ENCODE measurements at regions of chr20 and their contacts with region 1.

Region 1: DNA sequence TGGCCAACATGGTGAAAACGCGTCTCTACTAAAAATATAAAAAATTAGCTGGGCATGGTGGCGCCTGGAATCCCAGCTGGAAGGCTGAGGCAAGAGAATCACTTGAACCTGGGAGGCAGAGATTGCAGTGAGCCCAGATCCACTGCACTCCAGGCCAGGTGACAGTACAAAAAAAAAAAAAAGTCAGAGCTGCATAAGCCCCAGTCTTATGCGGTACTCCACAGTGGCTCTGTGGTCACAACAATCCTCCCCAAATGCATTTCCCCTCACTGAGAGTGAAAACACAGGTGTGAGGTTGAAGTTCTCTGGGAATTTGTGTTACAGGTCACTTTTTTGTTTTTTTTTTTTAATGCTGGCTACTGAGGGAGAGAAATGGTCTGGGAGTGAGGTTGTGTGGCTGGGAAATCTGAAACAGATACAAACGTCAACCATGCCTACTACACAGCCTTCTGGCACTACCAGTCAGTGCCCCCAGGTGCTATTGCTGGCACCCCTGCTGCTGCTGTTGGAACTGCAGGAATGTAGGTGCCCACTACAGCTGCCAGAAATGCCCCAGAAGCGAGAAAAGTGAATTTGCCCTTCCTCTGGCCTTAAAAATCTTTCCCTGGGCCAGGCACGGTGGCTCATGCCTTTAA is 5.7 kb downstream of the MRPS26 start:
- DNase-seq: no peak
- H3K4me3 ChIP-seq: no peak overlapping the region
- H3K27ac ChIP-seq: no peak overlapping the region
- H3K4me1 ChIP-seq: peaks cover 3% of the 10 kb centered on the region
- H3K27me3 ChIP-seq: no peaks in the 10 kb centered on the region
- CTCF ChIP-seq: peak in 1 of 2 donors; percentile 19

Region 2: GRCh38 chr20:3115190-3116107 is 63.9 kb after region 1 on chr20:
- CTCF ChIA-PET with region 1: no interaction called
- dilution Hi-C with region 1: no loop called
- in situ Hi-C with region 1: no loop called
- intact Hi-C with region 1: loop called (anchors 1 kb)
- DNase-seq: peak; percentile 37
- H3K4me3 ChIP-seq: no peak overlapping the region
- H3K27ac ChIP-seq: no peak overlapping the region
- H3K4me1 ChIP-seq: no peaks in the 10 kb centered on the region
- H3K27me3 ChIP-seq: no peaks in the 10 kb centered on the region
- CTCF ChIP-seq: peak; percentile 72 to 80

Region 3: DNA sequence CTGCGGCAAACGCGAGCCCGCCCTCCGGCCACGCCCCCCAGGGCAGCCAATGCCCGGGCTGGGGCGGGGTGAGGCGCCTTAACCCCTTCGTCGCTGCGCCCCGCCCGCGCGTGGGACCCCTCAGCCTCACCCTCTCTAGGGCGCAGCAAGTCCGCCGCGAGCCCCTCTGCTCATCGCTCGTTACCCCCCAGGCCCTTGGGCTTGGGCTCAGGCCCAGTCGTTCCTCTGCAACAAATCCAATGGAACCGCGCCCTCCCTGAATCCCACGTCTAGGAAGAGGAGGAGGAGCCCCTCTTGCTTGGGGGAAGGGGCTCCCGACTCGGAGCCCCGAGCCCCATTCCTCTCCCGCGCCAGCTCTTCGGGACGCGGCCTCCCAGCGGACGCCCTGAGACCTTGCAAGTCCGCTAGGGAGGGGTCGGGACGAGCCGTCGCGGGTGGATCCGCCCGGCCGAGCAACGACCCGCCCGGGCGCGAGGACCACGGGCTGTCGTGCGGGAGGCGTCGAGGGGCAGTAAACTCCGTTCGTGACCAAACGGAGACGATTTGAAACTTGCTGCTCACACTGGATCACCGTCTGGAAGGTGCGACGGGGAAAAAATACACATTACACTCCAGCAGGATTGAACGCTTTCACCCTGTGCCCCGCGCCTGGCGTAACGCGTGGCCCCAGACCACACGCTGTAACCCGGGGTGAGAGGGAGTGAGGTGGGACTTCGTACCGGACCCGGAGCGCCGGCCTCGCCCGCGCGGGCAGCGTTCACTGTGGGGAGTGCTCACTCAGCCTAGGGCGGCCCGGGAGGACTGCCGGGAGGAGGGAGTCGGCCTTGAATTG is 122.3 kb after region 1 on chr20:
- CTCF ChIA-PET with region 1: no interaction called
- dilution Hi-C with region 1: no loop called
- in situ Hi-C with region 1: no loop called
- intact Hi-C with region 1: loop called (anchors 5 kb)
- DNase-seq: peak; percentile 69
- H3K4me3 ChIP-seq: peak overlapping the region; percentile 66 to 96 (median 94)
- H3K27ac ChIP-seq: peak overlapping the region; percentile 31
- H3K4me1 ChIP-seq: peaks cover 18% of the 10 kb centered on the region
- H3K27me3 ChIP-seq: no peaks in the 10 kb centered on the region
- CTCF ChIP-seq: peak in 1 of 2 donors; percentile 36

Region 4: DNA sequence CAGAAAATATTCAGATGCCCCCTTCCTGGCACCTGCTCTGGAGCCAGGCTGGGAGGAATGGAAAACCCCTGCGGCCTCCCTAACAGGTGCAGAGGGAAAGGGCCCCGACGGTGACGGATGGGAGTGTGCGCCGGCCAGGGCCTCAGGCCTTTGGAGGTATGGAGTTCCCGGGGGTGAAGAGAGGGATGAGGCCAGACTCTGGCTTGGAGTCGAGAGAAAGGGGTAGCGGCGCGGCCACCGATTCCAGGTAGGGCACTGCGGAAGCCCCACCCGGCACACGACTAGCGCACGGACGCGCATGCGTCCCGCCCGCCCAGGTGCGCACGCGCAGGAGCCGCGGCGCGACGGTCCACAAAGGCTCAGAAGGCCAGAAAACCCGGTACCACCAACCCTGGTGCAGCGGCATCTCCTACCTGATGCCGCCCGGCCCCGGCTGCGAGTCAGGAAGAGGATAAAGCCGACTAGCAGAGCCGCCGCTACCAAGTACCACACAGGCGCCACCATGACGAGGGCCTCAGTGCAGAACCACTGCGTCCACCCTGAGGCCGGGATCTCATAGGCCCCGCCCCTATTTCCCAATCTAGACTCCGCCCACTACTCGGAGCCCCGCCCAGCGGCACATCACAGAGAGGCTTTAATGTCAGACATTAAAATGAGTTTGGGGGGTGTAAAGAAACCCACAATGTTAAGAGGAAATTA is 152.8 kb after region 1 on chr20 and contains the start of gene DDRGK1:
- CTCF ChIA-PET with region 1: no interaction called
- dilution Hi-C with region 1: no loop called
- in situ Hi-C with region 1: no loop called
- intact Hi-C with region 1: loop called (anchors 10 kb)
- DNase-seq: peak; percentile 80
- H3K4me3 ChIP-seq: peak within 1 kb of the TSS; percentile 73 to 81 (median 81)
- H3K27ac ChIP-seq: peak within 1 kb of the TSS; percentile 49
- H3K4me1 ChIP-seq: peaks cover 20% of the 10 kb centered on the region
- H3K27me3 ChIP-seq: no peaks in the 10 kb centered on the region
- CTCF ChIP-seq: no peak
- total RNA-seq, gene DDRGK1: 25.2 to 59.1 TPM

Region 5: DNA sequence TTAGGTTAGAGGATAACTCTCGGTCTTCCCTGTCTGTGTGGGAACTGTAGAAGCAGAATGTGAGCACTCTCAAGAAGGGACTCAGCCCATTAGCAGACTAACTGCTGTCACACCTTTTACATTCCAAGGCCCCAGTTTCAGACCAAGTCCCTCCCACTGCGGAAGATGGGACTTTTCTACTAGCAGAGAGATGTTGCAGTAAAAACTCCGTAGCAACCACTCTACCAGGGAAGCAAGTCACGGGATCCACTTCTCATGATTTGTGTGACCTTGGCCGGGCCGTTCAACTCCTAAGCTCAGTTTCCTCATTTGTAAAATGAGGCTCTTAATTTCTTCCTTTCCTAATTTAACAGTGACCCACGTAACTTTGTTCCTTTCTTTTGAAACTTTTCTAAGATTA is 264.6 kb after region 1 on chr20:
- CTCF ChIA-PET with region 1: no interaction called
- dilution Hi-C with region 1: no loop called
- in situ Hi-C with region 1: no loop called
- intact Hi-C with region 1: loop called (anchors 2 kb)
- DNase-seq: no peak
- H3K4me3 ChIP-seq: no peak overlapping the region
- H3K27ac ChIP-seq: no peak overlapping the region
- H3K4me1 ChIP-seq: peaks cover 50% of the 10 kb centered on the region
- H3K27me3 ChIP-seq: no peaks in the 10 kb centered on the region
- CTCF ChIP-seq: no peak

Region 6: DNA sequence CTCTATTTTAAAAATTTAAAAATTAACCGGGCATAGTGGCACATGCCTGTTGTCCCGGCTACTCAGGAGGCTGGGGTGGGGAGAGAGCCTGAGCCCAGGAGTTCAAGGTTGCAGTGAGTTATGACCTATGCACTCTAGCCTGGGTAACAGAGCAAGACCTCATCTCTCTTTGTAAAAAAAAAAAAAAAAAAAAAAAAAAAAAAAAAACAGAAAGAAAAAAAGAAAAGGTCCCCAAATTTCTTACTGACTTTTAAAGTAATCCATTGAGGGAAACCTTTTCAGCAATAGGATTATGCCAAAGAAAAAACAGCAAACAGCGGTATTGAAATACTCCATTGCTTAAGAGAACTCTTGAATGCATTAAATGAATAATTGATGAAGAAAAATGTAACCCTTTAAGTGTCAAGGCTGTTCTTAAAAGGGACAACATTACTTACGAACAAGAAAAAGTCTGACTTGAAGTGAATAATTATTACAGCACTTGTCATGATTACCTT is 361.9 kb after region 1 on chr20:
- CTCF ChIA-PET with region 1: no interaction called
- dilution Hi-C with region 1: no loop called
- in situ Hi-C with region 1: no loop called
- intact Hi-C with region 1: no loop called
- DNase-seq: no peak
- H3K4me3 ChIP-seq: no peak overlapping the region
- H3K27ac ChIP-seq: no peak overlapping the region
- H3K4me1 ChIP-seq: peaks cover under 1% of the 10 kb centered on the region
- H3K27me3 ChIP-seq: no peaks in the 10 kb centered on the region
- CTCF ChIP-seq: no peak

Region 7: GRCh38 chr20:3446779-3447178 is 395.3 kb after region 1 on chr20:
- CTCF ChIA-PET with region 1: no interaction called
- dilution Hi-C with region 1: no loop called
- in situ Hi-C with region 1: no loop called
- intact Hi-C with region 1: no loop called
- DNase-seq: no peak
- H3K4me3 ChIP-seq: no peak overlapping the region
- H3K27ac ChIP-seq: no peak overlapping the region
- H3K4me1 ChIP-seq: peaks cover 3% of the 10 kb centered on the region
- H3K27me3 ChIP-seq: no peaks in the 10 kb centered on the region
- CTCF ChIP-seq: no peak

Measured in mammary epithelial cell (primary cell).